Posterior vena cava (tissue), 2 donors: ENCODE measurements at regions of chr21 and their contacts with region 1.

Region 1: GRCh38 chr21:25589887-25590286 is 17.4 kb downstream of the MRPL39 start:
- DNase-seq: no peak

Region 2: DNA sequence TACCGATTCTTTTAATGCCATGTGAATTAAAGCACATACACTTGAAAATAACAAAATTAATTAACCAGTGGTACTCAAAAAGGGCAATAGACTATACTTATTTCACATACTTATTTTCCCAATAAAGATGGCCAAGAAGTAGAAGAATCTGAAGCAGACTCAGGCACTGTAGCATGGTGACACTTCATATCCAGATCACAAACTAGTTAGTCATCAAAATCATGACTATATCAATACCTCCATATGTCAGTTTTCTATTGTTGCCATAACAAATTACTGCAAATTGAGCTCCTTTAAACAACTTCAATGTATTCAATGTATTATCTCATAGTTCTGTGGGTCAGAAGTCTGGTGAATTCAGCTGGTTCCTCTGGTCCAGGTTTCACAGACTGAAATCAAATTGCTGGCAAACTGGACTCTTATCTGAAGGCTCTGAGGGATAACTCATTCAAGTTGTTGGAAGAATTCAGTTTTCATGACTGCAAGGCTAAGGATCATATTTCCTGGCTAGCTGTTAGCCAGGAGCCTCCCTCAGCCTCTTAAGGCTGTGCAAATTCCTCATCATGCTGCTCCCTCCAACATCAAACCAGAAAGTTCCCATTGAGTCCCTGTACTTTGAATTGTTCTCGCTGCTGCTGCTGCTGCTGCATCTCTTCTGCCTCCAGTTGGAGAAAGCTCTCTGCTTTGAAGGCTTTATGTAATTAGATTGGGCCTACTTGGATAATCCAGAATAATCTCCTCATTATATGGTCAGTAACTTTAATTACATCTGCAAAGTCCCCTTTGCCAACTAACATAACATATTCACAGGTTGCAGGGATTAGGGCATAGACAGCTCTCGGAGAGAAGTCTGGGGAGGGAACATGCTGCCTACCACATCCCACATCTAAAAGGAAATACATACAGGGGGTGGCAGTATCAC is 74.1 kb before region 1 on chr21:
- intact Hi-C with region 1: loop called in 1 of 2 experiments (anchors 2 kb)
- DNase-seq: no peak

Region 3: GRCh38 chr21:25717491-25718147 is 127.7 kb after region 1 on chr21:
- intact Hi-C with region 1: no loop called
- DNase-seq: no peak

Region 4: GRCh38 chr21:26795866-26796329 is 1206.0 kb after region 1 on chr21:
- intact Hi-C with region 1: loop called in 1 of 2 experiments (anchors 5 kb)
- DNase-seq: peak; percentile 83